Lower leg skin (tissue), 4 donors: ENCODE measurements at regions of chr18 and their contacts with region 1.

Region 1: GRCh38 chr18:40534723-40535122 is 1420.3 kb upstream of the PIK3C3 start:
- DNase-seq: no peak
- H3K4me3 ChIP-seq: no peak overlapping the region
- CTCF ChIP-seq: no peak
- POLR2A ChIP-seq: no peak

Region 2: GRCh38 chr18:39380866-39381265 is 1153.9 kb before region 1 on chr18:
- intact Hi-C with region 1: no loop called
- DNase-seq: no peak
- H3K4me3 ChIP-seq: no peak overlapping the region
- CTCF ChIP-seq: no peak
- POLR2A ChIP-seq: no peak

Region 3: DNA sequence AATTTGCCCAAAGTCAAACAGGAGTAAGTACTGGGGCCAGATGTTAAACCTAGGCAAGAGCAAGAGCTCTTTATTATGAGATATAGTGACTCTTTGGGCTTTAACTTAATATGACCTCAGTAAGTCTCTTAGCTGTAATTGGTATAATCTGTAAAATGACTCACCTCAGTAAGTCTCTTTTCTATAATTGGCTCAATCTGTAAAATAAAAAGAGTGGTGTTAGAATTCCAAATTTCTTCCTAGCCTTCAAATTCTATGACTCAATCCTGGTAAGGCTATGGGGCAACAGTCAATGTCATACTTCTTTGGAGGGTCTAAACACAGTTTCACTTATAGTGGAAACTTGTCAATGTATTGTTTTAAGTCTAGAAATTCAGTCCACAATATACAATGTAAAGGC is 188.6 kb before region 1 on chr18:
- intact Hi-C with region 1: no loop called
- DNase-seq: no peak
- H3K4me3 ChIP-seq: no peak overlapping the region
- CTCF ChIP-seq: no peak
- POLR2A ChIP-seq: no peak

Region 4: GRCh38 chr18:40437517-40437916 is 97.2 kb before region 1 on chr18:
- intact Hi-C with region 1: no loop called
- DNase-seq: no peak
- H3K4me3 ChIP-seq: no peak overlapping the region
- CTCF ChIP-seq: no peak
- POLR2A ChIP-seq: no peak

Region 5: DNA sequence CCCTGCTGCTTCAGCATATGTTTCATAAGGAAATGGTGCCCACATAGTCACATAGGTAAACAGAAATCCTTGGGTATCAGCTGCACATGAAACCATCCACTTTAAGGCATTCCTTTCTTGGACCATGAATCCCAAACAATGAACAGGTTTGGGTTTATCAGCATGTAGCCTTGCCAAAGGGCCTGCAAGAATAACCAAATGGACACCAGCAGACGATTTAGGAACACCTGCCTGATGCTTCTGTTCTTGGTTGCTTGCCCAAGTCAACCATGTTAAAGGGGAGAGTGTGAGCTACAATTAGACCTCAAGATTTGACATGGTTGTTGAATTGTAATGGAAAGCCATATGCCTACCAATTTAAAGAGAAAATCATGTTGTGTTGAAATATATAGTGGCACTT is 77.6 kb after region 1 on chr18:
- intact Hi-C with region 1: loop called (anchors 10 kb)
- DNase-seq: no peak
- H3K4me3 ChIP-seq: no peak overlapping the region
- CTCF ChIP-seq: no peak
- POLR2A ChIP-seq: no peak